ENCODE measurements at regions of chr22 and their contacts with region 1.

Region 1: DNA sequence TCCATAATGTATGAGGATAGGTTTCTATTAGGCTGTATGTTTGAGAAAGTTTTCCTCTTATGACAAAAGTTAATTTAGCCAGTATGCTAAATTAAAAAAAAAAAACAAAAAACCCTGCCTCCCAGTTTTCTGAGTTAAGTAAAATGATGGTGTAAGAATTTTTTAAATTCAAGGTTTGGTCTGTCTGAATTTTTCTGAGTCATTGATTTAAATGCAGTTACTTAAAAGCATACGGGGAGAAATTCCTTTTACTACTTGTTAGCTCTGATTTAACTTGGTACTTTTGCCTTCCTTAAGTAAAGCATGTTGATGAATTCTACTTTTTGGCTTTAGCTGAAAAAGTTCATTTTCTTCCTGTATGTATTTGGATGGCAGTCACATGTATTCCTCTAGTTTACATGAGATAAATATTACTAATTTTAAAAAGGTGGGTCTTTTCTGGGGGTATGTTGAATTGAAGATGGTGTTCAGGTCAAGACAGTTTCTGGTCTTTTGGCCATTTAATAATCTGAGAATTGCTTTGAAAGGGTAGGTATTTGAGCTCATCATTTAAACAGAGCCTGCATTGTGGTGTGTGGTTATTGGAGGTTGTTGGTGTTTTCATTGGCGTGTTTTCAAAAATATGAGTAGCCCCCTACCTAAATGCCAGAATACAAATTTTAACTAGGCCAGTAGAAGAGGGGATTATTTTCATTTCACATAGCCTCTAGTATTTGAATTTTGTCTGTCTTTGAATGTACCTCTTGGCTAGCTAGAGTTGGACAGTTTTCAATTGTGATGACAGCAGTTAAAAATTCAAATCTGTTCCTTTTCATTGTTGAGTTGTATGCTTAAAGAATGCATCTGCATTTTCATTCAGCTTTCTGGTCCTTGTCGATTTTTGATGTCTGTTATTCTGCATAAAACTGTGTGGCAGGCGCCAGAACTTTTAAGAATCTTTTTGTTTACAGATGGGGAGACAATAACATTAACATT is 64.7 kb downstream of the MTMR3 start:
- DNase-seq: no peak
- ATAC-seq: peak in 1 of 8 donors; percentile 19
- H3K4me3 ChIP-seq: no peak overlapping the region
- H3K27ac ChIP-seq: peak overlapping the region in 1 of 10 donors; percentile 64
- H3K4me1 ChIP-seq: peaks cover 0 to 81% (median 71%) of the 10 kb centered on the region in 9 donors
- H3K27me3 ChIP-seq: no peaks in the 10 kb centered on the region
- CTCF ChIP-seq: no peak

Region 2: DNA sequence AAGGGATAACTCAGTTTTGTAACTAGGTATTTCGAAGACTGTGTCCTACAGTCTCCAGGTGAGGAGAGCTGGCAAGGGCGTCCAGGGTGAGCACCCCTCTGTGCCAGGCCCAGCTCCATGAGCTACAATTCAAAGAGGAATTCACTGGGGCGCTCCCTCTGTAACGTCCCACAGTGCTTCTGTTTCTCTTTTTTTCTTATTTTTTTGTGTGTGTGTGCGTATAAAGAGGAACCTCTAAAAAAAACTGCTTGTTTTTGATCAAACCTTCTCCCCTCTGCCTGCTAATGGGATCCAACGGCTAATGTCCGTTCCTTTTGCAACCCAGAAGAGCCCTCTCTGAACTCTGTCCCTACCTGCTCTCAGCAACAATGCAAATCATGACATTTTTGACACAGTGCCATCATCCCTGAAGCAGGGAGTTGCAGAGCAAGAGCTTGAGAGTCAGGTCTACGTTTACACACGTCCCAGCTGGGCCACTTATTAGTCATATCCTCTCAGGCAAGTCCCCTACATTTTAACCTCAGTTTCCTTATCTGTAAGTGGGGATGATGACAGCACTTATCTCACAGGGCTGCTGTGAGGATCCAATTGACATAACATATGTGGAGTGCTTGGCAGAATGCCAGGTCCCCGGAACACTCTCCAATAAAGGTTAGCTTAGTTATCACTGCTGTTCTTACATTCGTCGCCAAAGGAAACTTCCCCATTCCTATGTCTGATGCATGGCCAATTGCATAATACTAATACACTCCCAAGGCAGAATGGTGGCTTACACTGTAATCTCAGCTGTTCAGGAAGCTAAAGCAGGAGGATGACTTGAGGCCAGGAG is 126.5 kb before region 1 on chr22:
- intact Hi-C with region 1: no loop called
- DNase-seq: peak; percentile 81 to 83
- ATAC-seq: peak; percentile 77 to 96 (median 86)
- H3K4me3 ChIP-seq: no peak overlapping the region
- H3K27ac ChIP-seq: peak overlapping the region in 9 of 10 donors; percentile 29 to 74 (median 53)
- H3K4me1 ChIP-seq: peaks cover 16 to 42% (median 35%) of the 10 kb centered on the region in 9 donors
- H3K27me3 ChIP-seq: no peaks in the 10 kb centered on the region
- CTCF ChIP-seq: no peak

Region 3: DNA sequence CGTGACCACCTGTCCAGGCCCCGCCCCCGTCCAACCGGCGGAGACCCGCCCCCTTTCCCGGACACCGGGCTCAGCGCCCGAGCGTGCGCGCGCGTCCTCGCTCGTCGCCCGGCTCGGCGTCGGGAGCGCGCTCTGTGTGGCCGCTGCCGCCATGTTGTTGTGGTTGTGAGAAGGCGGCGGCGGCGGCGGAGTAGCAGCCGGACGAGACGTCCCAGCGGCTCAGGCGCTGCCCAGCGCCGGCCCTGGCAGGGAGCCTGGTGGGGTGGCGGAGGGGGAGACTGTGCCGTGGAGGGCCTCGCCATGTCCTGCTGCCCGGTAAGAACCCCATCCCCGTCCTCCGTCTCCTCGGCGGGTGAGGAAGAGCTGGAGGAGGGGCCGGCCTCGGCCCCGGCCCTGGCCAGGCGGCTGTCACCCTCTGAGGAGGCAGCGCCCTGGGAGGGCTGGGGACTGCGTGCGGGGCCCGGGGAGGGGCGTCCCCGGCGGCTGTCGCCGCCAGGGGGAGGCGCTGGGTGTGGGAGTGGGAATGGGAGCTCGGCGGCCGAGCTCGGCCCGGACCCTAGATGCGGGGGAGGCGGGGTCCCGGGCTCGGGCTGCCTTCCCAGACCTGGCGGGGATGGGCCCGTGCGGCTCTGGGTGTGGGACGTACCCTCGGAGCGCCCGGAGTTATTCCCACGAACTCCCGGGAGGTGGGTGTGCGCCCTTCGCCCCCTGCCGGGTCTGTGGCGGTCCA is 64.5 kb before region 1 on chr22 and contains the start of gene MTMR3:
- intact Hi-C with region 1: loop called in 1 of 10 experiments (anchors 10 kb)
- DNase-seq: peak; percentile 94 to 96
- ATAC-seq: peak; percentile 90 to 97 (median 94)
- H3K4me3 ChIP-seq: peak within 1 kb of the TSS; percentile 68 to 99 (median 95)
- H3K27ac ChIP-seq: peak within 1 kb of the TSS; percentile 86 to 100 (median 98)
- H3K4me1 ChIP-seq: peaks cover 11 to 50% (median 46%) of the 10 kb centered on the region in 9 donors
- H3K27me3 ChIP-seq: no peaks in the 10 kb centered on the region
- CTCF ChIP-seq: peak in 8 of 9 donors; percentile 8 to 70 (median 54)
- total RNA-seq, gene MTMR3: 26.1 to 42.9 (median 36.5) TPM

Region 4: DNA sequence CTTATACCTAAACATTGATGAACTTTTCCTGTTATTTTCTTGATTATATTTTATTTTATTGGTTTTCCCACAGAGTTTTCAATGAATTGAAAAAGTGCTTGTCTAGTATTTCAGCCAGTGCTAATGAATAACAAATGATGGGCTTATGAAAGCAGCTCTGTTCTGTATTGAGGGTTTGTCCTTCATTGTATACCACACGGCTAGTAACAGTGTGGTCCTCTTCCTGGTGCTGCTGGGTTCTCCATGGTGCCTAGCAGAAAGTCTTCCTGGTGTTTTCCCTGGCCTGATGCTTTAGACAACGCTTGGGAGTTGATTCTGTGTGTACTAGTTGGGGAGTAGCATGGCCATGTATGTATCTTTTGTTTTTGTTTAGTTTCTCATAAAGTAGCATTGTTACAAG is 24.4 kb after region 1 on chr22:
- intact Hi-C with region 1: no loop called
- DNase-seq: no peak
- ATAC-seq: no peak
- H3K4me3 ChIP-seq: no peak overlapping the region
- H3K27ac ChIP-seq: no peak overlapping the region
- H3K4me1 ChIP-seq: peaks cover 0 to 13% (median 4%) of the 10 kb centered on the region in 9 donors
- H3K27me3 ChIP-seq: no peaks in the 10 kb centered on the region
- CTCF ChIP-seq: no peak

Measured in heart right ventricle (tissue), 16 donors.